ENCODE measurements at regions of chr9 and their contacts with region 1.

Region 1: DNA sequence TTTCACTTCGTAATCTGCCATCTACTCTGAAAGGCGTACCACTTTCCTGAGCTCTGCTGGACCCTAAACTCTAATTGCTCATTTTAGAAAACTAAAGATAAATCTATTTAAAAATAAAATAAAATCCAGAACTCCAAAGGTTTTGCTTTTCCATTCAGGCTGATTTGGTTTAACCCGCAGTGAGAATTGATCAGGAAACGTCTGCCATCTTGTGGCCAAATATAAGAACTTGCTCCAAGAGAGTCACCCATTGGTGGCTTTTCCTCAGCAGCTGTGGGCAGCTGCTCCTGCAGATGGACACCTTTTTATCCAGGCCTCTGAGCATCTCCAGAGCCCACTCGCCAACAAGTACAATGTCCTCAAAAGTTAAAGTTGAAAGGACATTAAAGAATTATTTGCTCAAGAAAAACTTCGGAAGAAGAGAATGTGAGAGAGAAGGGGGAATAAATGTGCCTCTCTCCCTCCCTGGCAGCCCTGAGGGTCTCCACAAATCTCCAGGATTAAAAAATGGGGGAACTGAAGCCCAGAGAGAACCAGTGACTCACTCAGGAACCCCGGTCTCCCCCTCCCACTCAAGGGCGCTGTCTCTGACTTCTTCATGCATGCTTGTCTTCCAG is 4.1 kb downstream of the SAXO1 start:
- DNase-seq: peak; percentile 16
- H3K4me3 Mint-ChIP-seq: no peak overlapping the region
- H3K27ac Mint-ChIP-seq: no peak overlapping the region
- H3K4me1 Mint-ChIP-seq: peaks cover 13% of the 10 kb centered on the region
- H3K27me3 Mint-ChIP-seq: peaks cover 15% of the 10 kb centered on the region

Region 2: GRCh38 chr9:17531642-17532254 is 1497.2 kb before region 1 on chr9:
- intact Hi-C with region 1: loop called (anchors 5 kb)
- DNase-seq: no peak
- H3K4me3 Mint-ChIP-seq: no peak overlapping the region
- H3K27ac Mint-ChIP-seq: no peak overlapping the region
- H3K4me1 Mint-ChIP-seq: no peaks in the 10 kb centered on the region
- H3K27me3 Mint-ChIP-seq: peaks cover 1% of the 10 kb centered on the region

Region 3: DNA sequence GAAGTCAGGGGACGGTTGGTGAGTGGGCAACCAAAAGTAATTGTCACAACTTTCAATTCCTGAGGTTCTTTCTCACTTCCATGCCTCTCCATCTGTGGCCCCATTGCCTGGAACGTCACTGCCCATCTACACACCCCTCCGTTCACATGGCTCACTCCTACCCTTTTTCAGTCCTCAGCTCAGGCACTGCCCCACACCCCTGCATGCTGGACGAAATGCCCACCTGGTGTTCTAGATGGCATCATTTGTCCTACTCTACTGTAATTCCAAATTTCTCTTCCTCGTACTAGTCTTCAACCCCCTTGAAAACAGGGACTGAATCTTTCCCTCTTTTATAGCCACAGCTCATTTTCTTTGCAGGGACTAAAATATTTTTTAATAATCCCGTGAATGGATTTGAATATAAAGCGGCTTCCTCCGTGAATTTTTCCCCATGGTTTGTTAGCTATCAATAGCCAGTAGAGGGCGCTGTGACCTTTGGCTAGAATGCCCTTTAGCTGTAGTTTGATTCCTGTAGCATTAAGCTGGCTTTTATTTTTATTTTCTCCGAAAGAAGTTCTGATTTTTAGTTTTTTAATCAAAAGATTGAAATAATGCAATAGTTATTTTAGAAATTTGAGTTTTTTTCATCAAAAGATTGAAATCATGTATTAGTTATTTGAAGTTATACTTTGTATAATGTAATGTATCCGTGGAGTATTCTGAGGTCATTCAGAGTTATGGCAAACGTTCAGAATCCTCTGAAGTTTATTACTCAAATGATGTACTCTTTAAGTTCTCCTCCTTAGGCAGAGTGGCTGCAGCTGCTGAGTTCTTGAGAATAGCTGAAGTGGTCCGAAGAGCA is 1218.0 kb before region 1 on chr9:
- intact Hi-C with region 1: loop called (anchors 5 kb)
- DNase-seq: peak; percentile 9
- H3K4me3 Mint-ChIP-seq: no peak overlapping the region
- H3K27ac Mint-ChIP-seq: no peak overlapping the region
- H3K4me1 Mint-ChIP-seq: no peaks in the 10 kb centered on the region
- H3K27me3 Mint-ChIP-seq: no peaks in the 10 kb centered on the region

Region 4: GRCh38 chr9:18255158-18255629 is 773.7 kb before region 1 on chr9:
- intact Hi-C with region 1: loop called (anchors 1 kb)
- DNase-seq: peak; percentile 48
- H3K4me3 Mint-ChIP-seq: no peak overlapping the region
- H3K27ac Mint-ChIP-seq: no peak overlapping the region
- H3K4me1 Mint-ChIP-seq: no peaks in the 10 kb centered on the region
- H3K27me3 Mint-ChIP-seq: peaks cover 9% of the 10 kb centered on the region

Region 5: GRCh38 chr9:18442629-18443491 is 586.1 kb before region 1 on chr9:
- intact Hi-C with region 1: loop called (anchors 5 kb)
- DNase-seq: peak; percentile 24
- H3K4me3 Mint-ChIP-seq: no peak overlapping the region
- H3K27ac Mint-ChIP-seq: no peak overlapping the region
- H3K4me1 Mint-ChIP-seq: no peaks in the 10 kb centered on the region
- H3K27me3 Mint-ChIP-seq: peaks cover 10% of the 10 kb centered on the region

Region 6: GRCh38 chr9:18707061-18707461 is 321.9 kb before region 1 on chr9:
- intact Hi-C with region 1: loop called (anchors 10 kb)
- DNase-seq: no peak
- H3K4me3 Mint-ChIP-seq: no peak overlapping the region
- H3K27ac Mint-ChIP-seq: no peak overlapping the region
- H3K4me1 Mint-ChIP-seq: no peaks in the 10 kb centered on the region
- H3K27me3 Mint-ChIP-seq: no peaks in the 10 kb centered on the region

Region 7: GRCh38 chr9:19174127-19174912 is 145.4 kb after region 1 on chr9:
- intact Hi-C with region 1: loop called (anchors 1 kb)
- DNase-seq: peak; percentile 32
- H3K4me3 Mint-ChIP-seq: no peak overlapping the region
- H3K27ac Mint-ChIP-seq: peak overlapping the region; percentile 15
- H3K4me1 Mint-ChIP-seq: peaks cover 22% of the 10 kb centered on the region
- H3K27me3 Mint-ChIP-seq: peaks cover 2% of the 10 kb centered on the region

Measured in activated T-helper 1 cell treated with anti-CD3 and anti-CD28 coated beads, Interleukin-12 subunit alpha, Interleukin-12 subunit beta, Interleukin-2, Interleukin-4 antibody, amounts not matched to agents 30 ng/mL and 10 ng/mL and 1 ng/mL, durations not matched to agents 14 hours and 24 hours and 36 hours (primary cell).